A673 (cell line): ENCODE measurements at regions of chr4 and their contacts with region 1.

Region 1: DNA sequence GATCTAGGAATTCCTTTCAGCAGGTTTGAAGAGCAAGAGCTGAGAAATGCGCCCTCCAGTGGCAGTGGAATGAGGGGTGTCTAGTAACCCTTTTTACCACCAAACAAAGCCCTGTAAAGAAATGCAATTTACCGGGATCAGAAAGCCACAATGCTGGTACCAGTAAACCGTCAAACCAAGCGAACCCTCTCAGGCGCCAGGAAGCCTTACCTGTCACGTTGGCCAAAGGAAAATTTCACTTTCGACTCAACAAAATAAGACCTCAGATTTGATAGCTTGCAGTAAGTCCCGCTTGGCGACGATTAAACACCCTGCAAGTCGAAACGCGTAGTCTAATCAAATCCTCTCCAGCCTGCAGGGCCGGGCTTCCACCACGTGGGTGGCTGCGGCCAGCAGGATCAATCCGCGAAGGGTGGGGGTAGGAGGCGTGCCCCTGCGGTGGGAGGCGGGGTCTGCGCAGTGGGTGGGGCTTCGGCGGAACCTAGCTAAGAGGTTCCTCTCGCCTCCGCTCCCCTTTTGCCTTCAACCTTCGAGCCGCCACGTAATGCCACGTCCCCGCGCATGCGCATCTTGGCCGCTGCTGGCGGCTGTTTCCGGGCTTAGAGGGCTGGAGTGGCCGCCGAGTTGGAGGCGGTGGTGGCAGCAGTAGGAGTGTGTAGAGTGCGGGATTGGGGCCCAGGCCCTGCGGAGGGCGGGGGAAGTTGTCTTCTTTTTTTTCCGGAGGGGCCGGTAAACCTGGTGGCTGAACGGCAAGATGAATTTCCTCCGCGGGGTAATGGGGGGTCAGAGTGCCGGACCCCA is at the start of gene USO1:
- DNase-seq: peak; percentile 95
- H3K4me3 ChIP-seq: peak within 1 kb of the TSS; percentile 84
- H3K27ac ChIP-seq: peak within 1 kb of the TSS; percentile 89
- H3K4me1 ChIP-seq: no peaks in the 10 kb centered on the region
- H3K27me3 ChIP-seq: no peaks in the 10 kb centered on the region
- CTCF ChIP-seq: peak; percentile 68
- total RNA-seq, gene USO1: 35.6 and 36.1 TPM in 2 replicates

Region 2: DNA sequence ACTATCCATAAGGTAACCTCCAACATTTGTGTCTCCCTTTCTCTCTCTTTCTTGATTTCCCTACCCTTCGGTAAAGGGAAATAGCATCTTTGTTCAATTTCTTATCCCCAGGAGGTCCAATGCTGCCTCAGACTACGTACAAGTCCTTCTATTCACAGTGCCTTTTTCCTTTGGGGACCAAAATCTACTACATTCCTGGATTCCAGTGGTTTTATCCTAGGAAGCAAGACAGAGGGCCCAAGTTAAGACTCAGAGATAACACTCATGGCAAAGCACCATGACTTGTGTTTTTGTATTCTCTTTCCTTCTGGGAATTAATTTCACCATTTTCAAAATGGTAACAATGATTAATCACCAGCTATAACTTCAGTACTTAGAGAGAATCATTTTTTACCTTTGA is 61.6 kb before region 1 on chr4:
- CTCF ChIA-PET with region 1: no interaction called
- POLR2A ChIA-PET with region 1: no interaction called
- intact Hi-C with region 1: no loop called
- DNase-seq: no peak
- H3K4me3 ChIP-seq: no peak overlapping the region
- H3K27ac ChIP-seq: no peak overlapping the region
- H3K4me1 ChIP-seq: peaks cover 10% of the 10 kb centered on the region
- H3K27me3 ChIP-seq: no peaks in the 10 kb centered on the region
- CTCF ChIP-seq: no peak

Region 3: DNA sequence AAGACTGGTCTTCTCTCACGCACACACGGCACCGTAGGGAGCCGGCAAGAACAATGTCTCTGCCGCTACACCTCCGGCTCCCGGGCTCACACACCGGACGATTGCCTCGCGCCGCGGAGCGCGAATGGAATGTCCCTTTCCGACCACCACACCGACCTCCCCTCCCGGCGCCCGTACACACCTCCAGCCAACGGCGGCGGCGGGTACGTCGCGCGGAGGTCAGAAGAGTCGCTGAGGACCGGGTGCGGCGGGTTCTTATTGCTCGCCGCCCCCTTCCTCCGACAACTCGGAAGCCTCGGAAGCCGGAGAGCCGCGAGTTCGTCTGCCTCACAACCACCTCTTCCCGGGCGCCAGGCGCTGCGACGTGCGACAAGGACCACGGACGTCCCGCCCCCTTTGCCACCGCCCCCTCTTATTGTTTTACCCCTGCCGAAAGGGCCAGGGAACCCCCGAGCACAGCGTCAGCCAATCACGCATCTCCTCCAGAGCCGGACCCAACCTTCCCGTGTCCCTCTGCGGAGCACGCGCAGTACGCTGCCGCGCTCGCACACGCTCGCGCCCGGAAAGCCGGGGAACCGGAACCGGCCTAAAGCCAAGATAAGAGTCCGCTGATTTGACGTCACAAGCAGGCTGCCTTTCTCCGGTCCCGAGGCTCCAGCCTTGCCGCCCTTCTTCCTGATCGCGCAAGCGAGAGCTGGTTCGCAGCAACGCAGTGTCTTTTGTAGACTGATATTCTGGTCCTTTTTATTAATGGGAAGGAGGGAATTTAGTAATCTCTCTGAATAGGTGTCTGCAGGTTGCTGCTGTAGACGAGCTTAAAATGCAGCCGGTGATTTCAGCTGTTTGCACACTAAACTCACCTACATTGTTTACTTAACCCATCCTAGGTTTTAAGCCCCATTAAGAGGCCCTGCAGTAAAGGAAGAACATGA is 51.0 kb before region 1 on chr4 and contains the start of gene G3BP2:
- CTCF ChIA-PET with region 1: no interaction called
- POLR2A ChIA-PET with region 1: no interaction called
- intact Hi-C with region 1: loop called (anchors 5 kb)
- DNase-seq: peak; percentile 96
- H3K4me3 ChIP-seq: peak within 1 kb of the TSS; percentile 91
- H3K27ac ChIP-seq: peak within 1 kb of the TSS; percentile 89
- H3K4me1 ChIP-seq: no peaks in the 10 kb centered on the region
- H3K27me3 ChIP-seq: no peaks in the 10 kb centered on the region
- CTCF ChIP-seq: no peak
- total RNA-seq, gene G3BP2: 104 and 124 TPM in 2 replicates

Region 4: GRCh38 chr4:75786526-75786925 is 62.3 kb after region 1 on chr4:
- CTCF ChIA-PET with region 1: no interaction called
- POLR2A ChIA-PET with region 1: no interaction called
- intact Hi-C with region 1: no loop called
- DNase-seq: no peak
- H3K4me3 ChIP-seq: no peak overlapping the region
- H3K27ac ChIP-seq: no peak overlapping the region
- H3K4me1 ChIP-seq: no peaks in the 10 kb centered on the region
- H3K27me3 ChIP-seq: no peaks in the 10 kb centered on the region
- CTCF ChIP-seq: no peak